WTC11 (cell line): ENCODE measurements at regions of chr11 and their contacts with region 1.

Region 1: DNA sequence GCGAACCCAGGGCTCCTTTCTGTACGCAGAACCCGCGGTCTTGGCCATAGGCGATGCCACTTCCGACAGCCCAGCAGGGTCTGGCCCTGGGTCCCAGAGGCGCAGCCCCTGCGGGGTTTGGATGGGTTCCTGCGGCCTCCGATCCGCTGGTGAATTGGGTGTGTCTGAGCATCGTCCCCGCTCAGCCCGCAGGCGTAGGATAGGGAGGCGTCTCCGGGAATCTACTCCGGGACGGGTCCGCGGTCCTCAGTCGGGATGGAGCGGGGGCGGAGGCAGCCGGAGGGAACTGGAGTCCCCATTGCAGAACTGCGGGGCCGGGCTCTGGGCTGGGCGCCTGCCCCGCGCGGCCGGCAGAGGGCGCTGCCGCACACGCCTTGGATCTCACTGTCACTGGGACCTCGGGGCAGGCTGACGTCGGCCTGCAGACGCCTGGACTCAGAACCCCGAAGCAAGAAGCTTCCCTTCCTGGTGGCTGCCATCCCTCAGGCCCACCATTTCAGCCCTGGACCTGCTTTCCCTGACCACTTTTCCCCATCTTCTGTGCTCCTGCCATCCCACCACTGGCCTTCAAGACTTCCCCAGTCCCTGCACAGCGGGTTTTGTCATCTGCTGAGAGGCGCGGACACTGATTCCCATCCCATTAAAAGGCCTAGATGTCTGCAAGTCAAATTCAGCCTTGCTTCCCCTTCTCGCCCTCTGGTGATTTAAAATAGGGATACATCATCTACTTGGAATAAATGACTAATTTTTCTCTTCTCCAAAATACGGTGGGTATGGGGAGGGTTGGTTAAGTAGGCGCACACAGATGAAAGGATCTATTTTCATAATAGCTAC is 38.3 kb upstream of the CREB3L1 start:
- DNase-seq: peak; percentile 96
- ATAC-seq: peak; percentile 80
- H3K4me3 Mint-ChIP-seq: peak overlapping the region; percentile 66
- H3K27ac Mint-ChIP-seq: no peak overlapping the region
- H3K4me1 Mint-ChIP-seq: peaks cover 44% of the 10 kb centered on the region
- H3K27me3 Mint-ChIP-seq: peaks cover 43% of the 10 kb centered on the region
- CTCF ChIP-seq: peak; percentile 97

Region 2: DNA sequence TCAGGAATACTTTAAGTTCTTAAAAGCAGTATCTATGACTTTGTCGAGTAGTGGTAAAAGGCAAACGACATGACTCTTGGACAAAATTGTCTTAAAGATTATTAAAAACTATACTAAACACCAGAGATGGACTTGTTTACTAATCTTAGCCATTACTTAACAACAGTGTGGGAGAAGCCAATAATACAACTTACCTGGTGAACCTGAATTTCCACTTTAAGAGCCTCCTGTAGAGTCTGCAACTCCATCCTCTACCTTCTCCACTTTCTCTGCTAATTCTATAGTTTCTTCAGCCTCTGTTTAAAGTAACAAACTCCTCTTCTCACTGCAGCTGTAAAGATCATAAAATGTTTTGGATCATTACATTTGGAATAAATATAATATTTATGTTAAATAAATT is 155.2 kb before region 1 on chr11:
- CTCF ChIA-PET with region 1: no interaction called
- POLR2A ChIA-PET with region 1: no interaction called
- DNase-seq: no peak
- ATAC-seq: no peak
- H3K4me3 Mint-ChIP-seq: no peak overlapping the region
- H3K27ac Mint-ChIP-seq: no peak overlapping the region
- H3K4me1 Mint-ChIP-seq: peaks cover 11% of the 10 kb centered on the region; the same call in 1 of the 2 replicates
- H3K27me3 Mint-ChIP-seq: no peaks in the 10 kb centered on the region
- CTCF ChIP-seq: no peak

Region 3: GRCh38 chr11:46121301-46121723 is 117.9 kb before region 1 on chr11 and contains the start of gene PHF21A:
- CTCF ChIA-PET with region 1: interaction called, 11 read pairs
- POLR2A ChIA-PET with region 1: interaction called, 12 read pairs
- DNase-seq: peak; percentile 88
- ATAC-seq: peak; percentile 60
- H3K4me3 Mint-ChIP-seq: peak within 1 kb of the TSS; percentile 88
- H3K27ac Mint-ChIP-seq: peak within 1 kb of the TSS; percentile 93
- H3K4me1 Mint-ChIP-seq: peaks cover 29% of the 10 kb centered on the region
- H3K27me3 Mint-ChIP-seq: no peaks in the 10 kb centered on the region
- CTCF ChIP-seq: no peak
- total RNA-seq, gene PHF21A: 29.4 to 36.6 TPM (median 33.1 TPM) in 3 replicates

Region 4: GRCh38 chr11:46278387-46279125 is 39.4 kb after region 1 on chr11:
- CTCF ChIA-PET with region 1: interaction called, 44 read pairs
- POLR2A ChIA-PET with region 1: interaction called, 16 read pairs
- DNase-seq: peak; percentile 83
- ATAC-seq: peak; percentile 68
- H3K4me3 Mint-ChIP-seq: peak overlapping the region; percentile 79
- H3K27ac Mint-ChIP-seq: peak overlapping the region; percentile 26
- H3K4me1 Mint-ChIP-seq: peaks cover 41% of the 10 kb centered on the region
- H3K27me3 Mint-ChIP-seq: peaks cover 10% of the 10 kb centered on the region
- CTCF ChIP-seq: peak; percentile 53

Region 5: GRCh38 chr11:46315033-46315738 is 76.0 kb after region 1 on chr11:
- CTCF ChIA-PET with region 1: interaction called, 119 read pairs
- POLR2A ChIA-PET with region 1: interaction called, 4 read pairs
- DNase-seq: peak; percentile 95
- ATAC-seq: peak; percentile 97
- H3K4me3 Mint-ChIP-seq: no peak overlapping the region
- H3K27ac Mint-ChIP-seq: no peak overlapping the region
- H3K4me1 Mint-ChIP-seq: peaks cover 6% of the 10 kb centered on the region
- H3K27me3 Mint-ChIP-seq: no peaks in the 10 kb centered on the region; the same call in 1 of the 2 replicates
- CTCF ChIP-seq: peak; percentile 98

Region 6: DNA sequence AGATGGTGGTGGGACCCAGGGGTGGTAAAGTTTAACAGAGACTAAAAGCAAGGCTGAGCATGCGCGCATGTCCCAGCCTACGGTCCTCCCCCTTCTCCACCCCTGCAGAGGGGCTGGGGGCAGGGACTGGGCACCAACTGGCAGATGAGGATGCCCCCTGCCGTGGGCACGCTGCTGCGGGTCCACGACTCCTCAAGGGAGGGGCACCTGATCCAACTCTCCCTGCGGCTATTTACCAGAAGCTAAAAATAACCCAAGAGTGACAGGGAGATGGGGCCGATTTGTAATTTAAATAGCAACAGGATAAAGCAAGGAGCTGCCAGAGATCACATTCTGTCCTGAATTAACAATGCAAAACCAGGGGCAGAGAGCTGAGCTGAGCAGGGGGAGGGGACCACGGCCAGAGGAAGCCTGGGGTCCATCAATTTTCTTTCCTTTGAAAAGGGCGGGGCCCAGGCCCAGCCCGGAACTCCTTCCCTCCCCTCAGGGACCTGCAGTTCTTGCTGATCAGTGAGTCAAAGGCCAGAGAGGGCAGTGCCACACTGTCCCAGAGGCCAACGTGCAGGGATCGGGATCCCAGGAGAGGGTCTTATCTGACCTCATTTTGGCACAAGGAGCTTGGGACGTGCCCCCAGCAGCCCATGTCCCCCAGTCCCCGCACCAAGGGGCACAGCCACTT is 99.9 kb after region 1 on chr11:
- CTCF ChIA-PET with region 1: interaction called, 31 read pairs
- POLR2A ChIA-PET with region 1: interaction called, 10 read pairs
- DNase-seq: peak; percentile 83
- ATAC-seq: peak; percentile 89
- H3K4me3 Mint-ChIP-seq: peak overlapping the region; percentile 60
- H3K27ac Mint-ChIP-seq: peak overlapping the region; percentile 99
- H3K4me1 Mint-ChIP-seq: peaks cover 96% of the 10 kb centered on the region
- H3K27me3 Mint-ChIP-seq: peaks cover 9% of the 10 kb centered on the region
- CTCF ChIP-seq: no peak

Region 7: GRCh38 chr11:46352063-46352841 is 113.1 kb after region 1 on chr11:
- CTCF ChIA-PET with region 1: interaction called, 43 read pairs
- POLR2A ChIA-PET with region 1: no interaction called
- DNase-seq: peak; percentile 86
- ATAC-seq: peak; percentile 77
- H3K4me3 Mint-ChIP-seq: peak overlapping the region; percentile 30
- H3K27ac Mint-ChIP-seq: peak overlapping the region; percentile 89
- H3K4me1 Mint-ChIP-seq: peaks cover 64% of the 10 kb centered on the region
- H3K27me3 Mint-ChIP-seq: no peaks in the 10 kb centered on the region
- CTCF ChIP-seq: peak; percentile 98